ENCODE measurements at regions of chr22 and their contacts with region 1.

Region 1: GRCh38 chr22:39003165-39003638 is 10.9 kb upstream of the APOBEC3C start:
- DNase-seq: peak; percentile 87 to 89
- ATAC-seq: peak; percentile 89
- H3K4me3 ChIP-seq: no peak overlapping the region
- H3K27ac ChIP-seq: no peak overlapping the region
- H3K4me1 ChIP-seq: no peaks in the 10 kb centered on the region
- H3K27me3 ChIP-seq: no peaks in the 10 kb centered on the region

Region 2: GRCh38 chr22:38766076-38766777 is 237.0 kb before region 1 on chr22:
- intact Hi-C with region 1: loop called (anchors 5 to 10 kb)
- DNase-seq: no peak
- ATAC-seq: no peak
- H3K4me3 ChIP-seq: no peak overlapping the region
- H3K27ac ChIP-seq: no peak overlapping the region
- H3K4me1 ChIP-seq: no peaks in the 10 kb centered on the region
- H3K27me3 ChIP-seq: no peaks in the 10 kb centered on the region

Region 3: DNA sequence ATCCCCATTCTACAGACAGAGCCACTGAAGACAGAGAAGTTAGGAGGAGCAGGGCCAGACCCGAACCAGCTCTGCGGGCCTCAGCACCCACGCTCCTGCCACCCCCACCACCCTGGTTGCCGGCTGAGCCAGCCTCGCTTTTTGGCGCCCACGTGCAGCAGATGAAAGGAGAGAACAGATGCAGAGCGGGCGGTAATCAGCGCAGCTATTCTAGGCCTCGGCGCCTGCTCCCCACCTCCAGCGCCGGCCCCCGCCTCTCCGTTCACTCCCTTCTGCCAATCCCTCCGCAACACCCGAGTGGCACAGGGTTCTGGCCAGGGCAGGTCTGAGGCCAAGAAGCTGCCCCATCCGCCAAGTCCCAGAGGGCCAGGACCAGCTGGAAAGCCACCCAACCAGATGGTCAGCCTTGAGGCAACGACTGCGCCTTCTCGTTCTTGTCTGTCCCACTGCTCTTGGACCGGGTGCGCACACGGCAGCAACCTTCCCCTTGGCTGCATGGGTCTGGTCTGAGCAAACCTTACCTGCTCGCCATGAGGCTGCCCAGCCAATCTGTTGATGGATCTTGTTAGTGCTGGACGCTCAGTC is 226.0 kb before region 1 on chr22:
- intact Hi-C with region 1: loop called in 1 of 2 experiments (anchors 10 kb)
- DNase-seq: no peak
- ATAC-seq: no peak
- H3K4me3 ChIP-seq: no peak overlapping the region
- H3K27ac ChIP-seq: no peak overlapping the region
- H3K4me1 ChIP-seq: no peaks in the 10 kb centered on the region
- H3K27me3 ChIP-seq: no peaks in the 10 kb centered on the region

Region 4: DNA sequence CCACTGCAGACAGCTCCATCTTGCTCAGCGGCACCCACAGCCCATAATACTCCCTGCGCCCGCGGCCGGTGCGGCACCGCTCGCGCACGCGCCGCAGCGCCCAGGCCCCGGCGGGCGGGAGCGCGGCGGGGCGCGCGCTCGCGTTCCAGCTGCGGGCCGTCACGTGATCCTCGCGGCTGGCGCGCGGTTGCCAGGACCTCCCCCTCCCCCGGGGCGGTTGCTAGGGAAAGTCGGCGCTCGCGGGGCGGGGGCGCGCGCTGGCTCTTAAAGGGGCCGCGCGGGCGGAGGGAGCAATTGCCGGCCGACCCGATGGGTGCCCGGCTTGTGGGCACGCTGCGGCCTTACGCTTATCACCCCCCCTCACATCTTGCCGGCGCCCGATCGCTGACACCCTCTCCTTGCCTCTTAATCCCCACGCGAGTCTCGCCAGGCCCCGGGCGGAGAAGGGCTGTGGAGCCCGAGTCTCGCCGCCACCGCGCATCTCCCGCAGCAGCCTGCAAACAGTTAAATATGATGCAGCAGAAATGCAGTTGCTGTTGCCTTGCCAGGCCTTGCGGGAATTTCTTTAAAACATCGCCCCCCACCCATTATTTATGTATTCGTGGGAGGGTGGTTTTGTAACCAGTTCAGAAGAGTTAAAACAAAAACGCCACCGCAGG is 130.9 kb before region 1 on chr22 and contains the start of gene CBX6:
- intact Hi-C with region 1: loop called (anchors 2 to 5 kb)
- DNase-seq: peak; percentile 97 to 99
- ATAC-seq: peak; percentile 92
- H3K4me3 ChIP-seq: peak within 1 kb of the TSS; percentile 91 to 94
- H3K27ac ChIP-seq: peak within 1 kb of the TSS; percentile 50 to 92
- H3K4me1 ChIP-seq: no peaks in the 10 kb centered on the region
- H3K27me3 ChIP-seq: no peaks in the 10 kb centered on the region
- total RNA-seq, gene CBX6: 97.2 to 104 TPM

Region 5: GRCh38 chr22:38927033-38927781 is 76.0 kb before region 1 on chr22:
- intact Hi-C with region 1: loop called in 1 of 2 experiments (anchors 2 kb)
- DNase-seq: peak; percentile 87 to 92
- ATAC-seq: peak; percentile 69
- H3K4me3 ChIP-seq: peak overlapping the region in 1 of 2 donors; percentile 36
- H3K27ac ChIP-seq: peak overlapping the region in 1 of 2 donors; percentile 21
- H3K4me1 ChIP-seq: no peaks in the 10 kb centered on the region
- H3K27me3 ChIP-seq: no peaks in the 10 kb centered on the region

Region 6: GRCh38 chr22:39039306-39040126 is 36.3 kb after region 1 on chr22:
- intact Hi-C with region 1: no loop called
- DNase-seq: no peak
- ATAC-seq: no peak
- H3K4me3 ChIP-seq: no peak overlapping the region
- H3K27ac ChIP-seq: no peak overlapping the region
- H3K4me1 ChIP-seq: no peaks in the 10 kb centered on the region
- H3K27me3 ChIP-seq: no peaks in the 10 kb centered on the region

Region 7: DNA sequence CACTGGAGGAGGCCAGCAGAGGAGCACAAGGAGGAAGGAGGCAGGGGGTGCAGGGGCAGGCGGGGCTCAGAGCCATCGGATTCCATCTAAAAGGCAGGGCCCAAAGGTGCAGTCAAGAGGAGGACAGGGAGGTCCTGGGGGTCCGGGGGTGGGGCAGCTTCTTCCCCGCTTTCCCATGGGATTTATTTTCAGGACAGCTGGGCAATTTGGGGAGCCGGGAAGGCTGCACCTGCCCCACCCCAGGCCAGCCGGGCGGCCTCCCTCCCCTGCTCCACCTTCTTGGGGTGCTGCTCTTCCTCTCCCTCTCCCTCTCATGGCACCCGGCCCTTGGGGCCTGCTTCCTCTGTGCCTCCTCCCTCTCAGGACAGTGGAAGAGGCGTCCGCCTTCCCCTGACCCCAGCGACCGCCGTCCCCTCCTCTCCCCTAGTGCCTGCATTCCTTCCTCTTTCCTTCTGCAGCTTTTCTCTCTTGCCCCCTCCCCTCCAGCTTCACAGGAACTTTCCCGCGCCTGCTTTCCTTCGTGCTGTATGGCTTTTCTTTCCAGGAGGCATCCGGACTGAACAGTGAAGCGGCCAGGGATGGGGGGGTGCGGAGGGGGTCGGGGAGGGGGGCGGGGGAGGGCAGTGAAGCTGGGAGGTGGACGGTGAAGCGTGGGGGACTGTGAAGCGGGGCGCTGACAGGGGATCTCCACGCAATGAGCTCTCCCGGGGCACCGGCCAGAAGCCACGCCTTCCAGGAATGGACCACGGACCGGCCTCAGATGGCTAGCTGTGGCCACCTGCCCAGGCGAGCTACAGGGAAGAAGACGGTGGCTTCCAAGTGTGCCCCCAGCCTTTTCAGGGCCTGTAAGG is 120.8 kb after region 1 on chr22:
- intact Hi-C with region 1: loop called in 1 of 2 experiments (anchors 5 kb)
- DNase-seq: no peak
- ATAC-seq: no peak
- H3K4me3 ChIP-seq: no peak overlapping the region
- H3K27ac ChIP-seq: no peak overlapping the region
- H3K4me1 ChIP-seq: no peaks in the 10 kb centered on the region
- H3K27me3 ChIP-seq: no peaks in the 10 kb centered on the region